ENCODE measurements at regions of chr3 and their contacts with region 1.

Region 1: GRCh38 chr3:47824541-47825473 is 21.9 kb downstream of the DHX30 start:
- DNase-seq: peak in 1 of 2 donors; percentile 86
- H3K4me3 ChIP-seq: peak overlapping the region; percentile 99 to 100
- H3K27ac ChIP-seq: peak overlapping the region; percentile 84 to 85
- H3K4me1 ChIP-seq: peaks cover 5 to 6% of the 10 kb centered on the region in 2 donors
- H3K27me3 ChIP-seq: no peaks in the 10 kb centered on the region
- CTCF ChIP-seq: peak; percentile 66 to 94 (median 81)

Region 2: DNA sequence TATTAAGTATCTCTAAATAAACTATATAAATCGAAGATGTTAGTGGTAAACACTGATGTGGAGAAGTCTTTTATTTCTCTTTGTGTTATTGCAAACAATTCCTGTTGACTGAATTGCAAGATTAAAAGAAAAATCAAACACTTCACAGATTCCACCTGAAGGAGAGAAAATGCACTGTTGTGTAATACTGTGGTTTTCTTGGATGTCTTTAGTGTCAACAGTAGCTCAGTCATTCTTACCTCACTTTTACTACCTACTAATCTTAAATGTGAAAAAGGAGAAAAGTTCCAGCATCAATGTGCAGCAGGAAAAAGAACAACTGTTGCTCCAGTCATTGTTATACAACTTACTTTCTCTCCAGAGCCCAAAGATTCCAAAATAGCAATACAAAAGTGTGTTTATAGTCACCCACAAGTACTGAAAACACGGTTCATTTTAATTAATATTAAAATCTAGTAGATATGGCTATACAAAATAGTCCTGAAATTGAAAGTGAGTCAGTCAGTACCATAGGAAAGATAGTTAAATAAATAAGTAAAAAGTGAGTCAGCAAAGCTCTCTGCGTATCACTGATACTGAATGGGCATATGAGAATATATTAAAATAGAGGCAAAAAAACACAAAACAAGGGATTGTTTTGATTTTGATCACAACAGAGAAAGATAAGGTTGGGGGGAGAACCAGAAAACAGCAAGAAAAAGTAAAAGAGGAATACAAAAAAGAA is 155.6 kb before region 1 on chr3:
- intact Hi-C with region 1: no loop called
- DNase-seq: no peak
- H3K4me3 ChIP-seq: no peak overlapping the region
- H3K27ac ChIP-seq: no peak overlapping the region
- H3K4me1 ChIP-seq: no peaks in the 10 kb centered on the region
- H3K27me3 ChIP-seq: no peaks in the 10 kb centered on the region
- CTCF ChIP-seq: no peak

Region 3: DNA sequence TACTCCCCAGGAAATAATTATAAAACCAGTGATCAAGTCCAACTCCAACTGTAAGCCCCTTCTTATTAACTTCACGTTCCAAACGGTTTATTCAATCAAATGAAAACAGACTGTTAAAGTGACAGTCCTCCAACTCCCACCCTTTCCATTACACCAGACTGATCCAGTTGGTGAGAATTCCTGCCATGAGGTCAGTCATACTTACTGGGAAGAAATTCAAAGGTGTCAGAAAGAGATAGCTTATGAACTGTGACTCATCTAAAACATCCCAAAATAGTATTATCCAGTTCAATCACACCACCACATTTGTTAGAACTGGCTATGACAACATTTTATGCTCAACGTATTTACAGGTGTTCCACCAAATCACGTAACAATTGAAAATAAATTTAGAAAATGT is 62.6 kb before region 1 on chr3:
- intact Hi-C with region 1: no loop called
- DNase-seq: no peak
- H3K4me3 ChIP-seq: no peak overlapping the region
- H3K27ac ChIP-seq: peak overlapping the region in 1 of 2 donors; percentile 19
- H3K4me1 ChIP-seq: no peaks in the 10 kb centered on the region
- H3K27me3 ChIP-seq: no peaks in the 10 kb centered on the region
- CTCF ChIP-seq: no peak

Region 4: DNA sequence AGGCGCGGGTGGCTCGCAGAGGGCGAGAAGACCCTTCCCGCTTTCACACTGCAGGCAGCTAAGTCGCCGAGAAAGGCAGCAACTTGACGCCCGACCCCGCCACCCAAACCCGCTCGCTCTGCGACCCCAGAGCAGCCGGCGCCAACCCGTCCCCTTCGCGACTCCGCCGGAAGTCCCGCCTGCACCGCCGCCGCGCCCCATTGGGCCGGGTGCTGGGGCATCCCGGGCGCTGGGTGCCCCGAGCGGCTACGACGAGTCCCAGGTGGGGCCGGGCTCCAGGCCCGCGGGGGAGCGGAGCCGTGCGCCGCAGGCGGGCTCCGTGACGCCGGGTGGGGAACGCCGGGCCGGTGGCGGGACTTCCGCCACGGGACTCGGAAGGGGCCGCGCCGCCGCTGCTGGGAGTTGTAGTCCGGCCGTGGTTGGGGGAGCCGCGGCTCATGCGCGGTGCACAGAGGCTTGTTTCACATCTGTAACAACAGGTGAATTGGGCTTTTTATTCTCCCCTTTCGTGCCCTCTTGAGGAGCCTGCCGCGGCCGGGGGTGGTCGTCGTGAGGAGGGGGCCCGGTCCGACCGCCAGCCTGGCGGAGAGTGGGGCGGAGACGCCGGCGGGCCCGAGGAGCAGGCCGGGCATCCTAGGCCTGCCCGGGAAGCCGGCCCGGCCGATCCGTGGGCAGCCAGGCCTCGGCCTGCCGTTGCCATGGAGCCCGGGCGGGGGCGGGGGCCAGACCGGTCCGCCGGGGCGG is 21.9 kb before region 1 on chr3 and contains the start of gene DHX30:
- intact Hi-C with region 1: loop called (anchors 2 kb)
- DNase-seq: peak; percentile 62 to 93
- H3K4me3 ChIP-seq: peak within 1 kb of the TSS; percentile 94 to 97
- H3K27ac ChIP-seq: peak within 1 kb of the TSS; percentile 98 to 99
- H3K4me1 ChIP-seq: peaks cover 12 to 20% of the 10 kb centered on the region in 2 donors
- H3K27me3 ChIP-seq: no peaks in the 10 kb centered on the region
- CTCF ChIP-seq: no peak
- total RNA-seq, gene DHX30: 25.8 TPM

Region 5: DNA sequence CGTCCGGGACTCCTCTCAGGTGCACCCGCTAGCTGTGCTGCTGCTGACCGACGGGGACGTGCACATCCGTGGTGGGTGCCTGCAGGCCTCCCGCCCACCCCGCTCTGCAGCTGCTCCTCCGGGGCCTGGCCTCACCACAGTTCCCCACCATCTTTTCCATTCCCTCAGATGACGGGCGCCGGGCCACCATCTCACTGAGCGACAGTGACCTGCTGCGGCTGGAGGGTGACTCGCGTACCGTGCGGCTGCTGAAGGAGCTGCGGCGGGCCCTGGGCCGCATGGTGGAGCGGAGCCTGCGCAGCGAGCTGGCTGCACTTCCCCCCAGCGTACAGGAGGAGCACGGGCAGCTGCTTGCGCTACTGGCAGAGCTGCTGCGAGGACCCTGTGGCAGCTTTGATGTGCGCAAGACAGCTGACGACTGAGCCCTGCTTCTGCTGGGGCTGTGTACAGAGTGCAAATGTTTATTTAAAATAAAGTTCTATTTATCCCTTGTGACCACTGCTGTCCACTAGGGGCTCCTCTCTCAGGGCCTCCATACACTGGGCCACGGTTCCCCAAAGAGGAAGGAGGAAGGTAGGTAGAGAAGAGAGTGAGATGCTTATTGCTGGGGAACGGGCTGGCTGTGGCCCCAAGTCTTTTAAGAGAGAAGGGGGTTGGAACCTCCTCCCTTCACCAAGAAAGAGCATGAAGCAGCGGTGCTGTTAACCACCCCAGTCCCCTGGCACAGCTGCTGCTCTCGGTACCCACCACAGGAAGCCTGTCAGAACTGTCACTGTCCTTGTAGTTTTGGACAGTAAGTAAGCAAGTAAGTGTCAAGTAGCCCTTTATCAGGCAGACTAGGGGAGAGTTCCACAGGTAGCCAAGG is 25.1 kb after region 1 on chr3:
- intact Hi-C with region 1: no loop called
- DNase-seq: no peak
- H3K4me3 ChIP-seq: no peak overlapping the region
- H3K27ac ChIP-seq: no peak overlapping the region
- H3K4me1 ChIP-seq: no peaks in the 10 kb centered on the region
- H3K27me3 ChIP-seq: no peaks in the 10 kb centered on the region
- CTCF ChIP-seq: peak; percentile 24 to 39 (median 30)